CD4-positive, alpha-beta T cell (primary cell): ENCODE measurements at regions of chr4 and their contacts with region 1.

Region 1: DNA sequence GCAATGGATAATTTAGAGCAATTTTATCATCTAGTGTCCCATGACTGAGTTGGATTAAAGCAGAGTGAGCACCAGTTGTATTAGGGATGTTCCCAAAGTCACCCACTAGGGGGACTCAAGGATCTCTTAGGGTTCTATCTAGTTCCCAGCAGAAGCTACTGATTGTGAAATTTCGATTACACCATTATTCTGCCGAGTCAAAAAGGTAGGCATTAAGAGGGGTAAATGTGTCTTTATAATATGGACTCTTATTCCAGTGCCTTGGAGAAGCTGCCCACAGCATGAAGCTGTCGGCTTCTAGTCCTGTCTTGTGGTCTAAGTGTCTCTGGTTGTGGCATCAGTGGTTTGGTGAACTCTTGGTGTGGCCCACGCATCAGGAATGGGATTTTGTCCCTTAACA is 53.3 kb downstream of the RGS12 start:
- DNase-seq: peak in 7 of 14 experiments; percentile 19 to 79 (median 58)
- ATAC-seq: peak; percentile 84
- H3K4me3 ChIP-seq: no peak overlapping the region
- H3K4me3 Mint-ChIP-seq: no peak overlapping the region
- H3K27ac ChIP-seq: no peak overlapping the region
- H3K27ac Mint-ChIP-seq: no peak overlapping the region
- H3K4me1 ChIP-seq: peaks cover 7% of the 10 kb centered on the region
- H3K4me1 Mint-ChIP-seq: peaks cover 34% of the 10 kb centered on the region
- H3K27me3 ChIP-seq: no peaks in the 10 kb centered on the region
- H3K27me3 Mint-ChIP-seq: no peaks in the 10 kb centered on the region
- CTCF ChIP-seq: peak; percentile 96

Region 2: DNA sequence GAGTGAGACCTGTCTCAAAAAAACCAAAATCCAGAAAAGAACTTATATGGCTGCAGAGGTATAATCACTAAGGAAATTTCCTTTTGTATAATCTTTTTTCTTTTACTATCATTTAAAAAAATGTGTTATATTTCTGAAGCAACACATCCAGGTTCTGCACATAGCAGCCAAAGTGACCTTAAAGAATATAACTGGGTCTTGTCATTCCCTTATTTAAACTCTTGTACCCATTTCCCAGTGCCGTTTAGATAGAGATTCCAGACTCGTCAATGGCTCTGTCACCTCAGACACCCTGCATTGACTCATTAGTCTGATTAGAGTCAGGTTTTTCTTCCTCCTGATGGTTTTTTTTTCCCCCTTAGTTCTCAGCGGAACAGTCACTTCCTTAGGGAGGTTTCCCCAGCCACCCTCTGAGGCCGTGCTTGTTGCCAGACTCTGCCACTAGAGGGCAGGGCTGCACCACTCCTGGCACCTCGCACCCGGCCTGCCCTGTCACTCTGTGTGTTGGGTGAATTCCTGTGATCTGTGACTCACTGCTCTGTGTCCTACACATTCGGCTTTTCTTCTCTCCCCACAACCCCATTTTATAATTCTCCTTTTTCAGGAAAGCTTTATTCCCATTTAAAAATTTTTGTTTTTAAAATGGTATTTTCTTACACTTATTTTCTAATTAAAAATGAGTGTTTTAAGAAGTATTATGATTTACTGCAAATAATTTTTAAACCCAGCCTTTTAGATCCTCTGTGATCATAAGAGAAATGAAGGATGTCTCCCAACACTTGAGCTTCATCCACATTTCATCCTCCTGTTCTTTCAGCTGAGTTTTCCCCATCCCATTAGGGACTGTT is 239.6 kb before region 1 on chr4:
- CTCF ChIA-PET with region 1: no interaction called
- POLR2A ChIA-PET with region 1: no interaction called
- intact Hi-C with region 1: loop called in 1 of 2 experiments (anchors 5 kb)
- DNase-seq: peak; percentile 64 to 92 (median 80)
- ATAC-seq: peak; percentile 99
- H3K4me3 ChIP-seq: no peak overlapping the region
- H3K4me3 Mint-ChIP-seq: no peak overlapping the region
- H3K27ac ChIP-seq: no peak overlapping the region
- H3K27ac Mint-ChIP-seq: peak overlapping the region; percentile 1
- H3K4me1 ChIP-seq: peaks cover 5% of the 10 kb centered on the region
- H3K4me1 Mint-ChIP-seq: peaks cover 7% of the 10 kb centered on the region
- H3K27me3 ChIP-seq: no peaks in the 10 kb centered on the region
- H3K27me3 Mint-ChIP-seq: no peaks in the 10 kb centered on the region
- CTCF ChIP-seq: peak; percentile 99

Region 3: GRCh38 chr4:3193531-3194203 is 152.5 kb before region 1 on chr4:
- CTCF ChIA-PET with region 1: no interaction called
- POLR2A ChIA-PET with region 1: no interaction called
- intact Hi-C with region 1: loop called (anchors 1 to 2 kb)
- DNase-seq: peak in 3 of 14 experiments; percentile 47 to 60 (median 48)
- ATAC-seq: peak; percentile 38
- H3K4me3 ChIP-seq: no peak overlapping the region
- H3K4me3 Mint-ChIP-seq: peak overlapping the region; percentile 16
- H3K27ac ChIP-seq: no peak overlapping the region
- H3K27ac Mint-ChIP-seq: peak overlapping the region; percentile 9
- H3K4me1 ChIP-seq: peaks cover 53% of the 10 kb centered on the region
- H3K4me1 Mint-ChIP-seq: peaks cover 58% of the 10 kb centered on the region
- H3K27me3 ChIP-seq: no peaks in the 10 kb centered on the region
- H3K27me3 Mint-ChIP-seq: no peaks in the 10 kb centered on the region
- CTCF ChIP-seq: peak; percentile 70

Region 4: GRCh38 chr4:3369781-3370674 is 23.9 kb after region 1 on chr4:
- CTCF ChIA-PET with region 1: interaction called, 5 read pairs
- POLR2A ChIA-PET with region 1: interaction called, 5 read pairs
- intact Hi-C with region 1: loop called in 1 of 2 experiments (anchors 1 kb)
- DNase-seq: peak in 8 of 14 experiments; percentile 7 to 86 (median 60)
- ATAC-seq: peak; percentile 74
- H3K4me3 ChIP-seq: peak overlapping the region; percentile 32
- H3K4me3 Mint-ChIP-seq: peak overlapping the region; percentile 74
- H3K27ac ChIP-seq: no peak overlapping the region
- H3K27ac Mint-ChIP-seq: peak overlapping the region; percentile 52
- H3K4me1 ChIP-seq: peaks cover 55% of the 10 kb centered on the region
- H3K4me1 Mint-ChIP-seq: peaks cover 74% of the 10 kb centered on the region
- H3K27me3 ChIP-seq: peaks cover 0 to 9% of the 10 kb centered on the region in 2 experiments
- H3K27me3 Mint-ChIP-seq: peaks cover 11% of the 10 kb centered on the region
- CTCF ChIP-seq: no peak

Region 5: GRCh38 chr4:3388471-3389232 is 42.5 kb after region 1 on chr4:
- CTCF ChIA-PET with region 1: no interaction called
- POLR2A ChIA-PET with region 1: no interaction called
- intact Hi-C with region 1: loop called in 1 of 2 experiments (anchors 1 kb)
- DNase-seq: peak in 3 of 14 experiments; percentile 20 to 68 (median 61)
- ATAC-seq: no peak
- H3K4me3 ChIP-seq: no peak overlapping the region
- H3K4me3 Mint-ChIP-seq: peak overlapping the region; percentile 45
- H3K27ac ChIP-seq: no peak overlapping the region
- H3K27ac Mint-ChIP-seq: no peak overlapping the region
- H3K4me1 ChIP-seq: peaks cover 20% of the 10 kb centered on the region
- H3K4me1 Mint-ChIP-seq: peaks cover 29% of the 10 kb centered on the region
- H3K27me3 ChIP-seq: no peaks in the 10 kb centered on the region
- H3K27me3 Mint-ChIP-seq: no peaks in the 10 kb centered on the region
- CTCF ChIP-seq: no peak

Region 6: DNA sequence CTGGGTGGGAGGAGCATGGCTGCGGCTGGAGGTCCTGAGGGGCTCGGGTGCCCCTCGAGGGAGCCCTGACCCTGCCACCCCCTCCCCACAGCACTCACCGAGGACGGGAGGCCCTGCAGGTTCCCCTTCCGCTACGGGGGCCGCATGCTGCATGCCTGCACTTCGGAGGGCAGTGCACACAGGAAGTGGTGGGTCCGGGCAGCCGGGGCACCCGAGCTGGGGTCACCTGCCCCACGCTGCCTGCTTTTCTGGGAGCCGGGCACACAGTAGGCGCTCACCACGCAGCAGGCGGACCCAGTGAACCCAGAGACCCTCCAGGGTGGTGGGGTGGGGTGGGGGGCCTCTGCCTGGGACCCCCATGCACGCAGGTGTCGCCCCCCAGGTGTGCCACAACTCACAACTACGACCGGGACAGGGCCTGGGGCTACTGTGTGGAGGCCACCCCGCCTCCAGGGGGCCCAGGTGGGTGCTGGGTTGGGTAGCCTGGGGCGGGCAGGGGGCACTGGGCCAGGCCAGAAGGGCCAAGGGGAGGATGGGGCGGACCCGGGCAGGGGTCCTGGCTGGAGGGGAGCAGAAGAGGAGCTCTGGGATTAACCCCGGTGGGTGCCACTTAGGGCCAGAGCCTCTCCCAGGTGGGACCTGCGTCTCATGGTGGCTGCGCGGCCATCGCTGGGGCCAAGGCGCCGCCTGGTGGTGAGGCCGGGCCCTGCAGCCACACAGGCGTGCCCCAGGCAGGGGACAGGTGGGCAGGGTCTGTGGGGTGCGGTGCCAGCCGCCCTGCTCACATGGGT is 97.0 kb after region 1 on chr4:
- CTCF ChIA-PET with region 1: interaction called, 4 read pairs
- POLR2A ChIA-PET with region 1: no interaction called
- intact Hi-C with region 1: loop called (anchors 1 kb)
- DNase-seq: peak; percentile 38 to 83 (median 58)
- ATAC-seq: peak; percentile 86
- H3K4me3 ChIP-seq: no peak overlapping the region
- H3K4me3 Mint-ChIP-seq: no peak overlapping the region
- H3K27ac ChIP-seq: no peak overlapping the region
- H3K27ac Mint-ChIP-seq: no peak overlapping the region
- H3K4me1 ChIP-seq: peaks cover 11% of the 10 kb centered on the region
- H3K4me1 Mint-ChIP-seq: no peaks in the 10 kb centered on the region
- H3K27me3 ChIP-seq: no peaks in the 10 kb centered on the region
- H3K27me3 Mint-ChIP-seq: no peaks in the 10 kb centered on the region
- CTCF ChIP-seq: peak; percentile 88

Region 7: DNA sequence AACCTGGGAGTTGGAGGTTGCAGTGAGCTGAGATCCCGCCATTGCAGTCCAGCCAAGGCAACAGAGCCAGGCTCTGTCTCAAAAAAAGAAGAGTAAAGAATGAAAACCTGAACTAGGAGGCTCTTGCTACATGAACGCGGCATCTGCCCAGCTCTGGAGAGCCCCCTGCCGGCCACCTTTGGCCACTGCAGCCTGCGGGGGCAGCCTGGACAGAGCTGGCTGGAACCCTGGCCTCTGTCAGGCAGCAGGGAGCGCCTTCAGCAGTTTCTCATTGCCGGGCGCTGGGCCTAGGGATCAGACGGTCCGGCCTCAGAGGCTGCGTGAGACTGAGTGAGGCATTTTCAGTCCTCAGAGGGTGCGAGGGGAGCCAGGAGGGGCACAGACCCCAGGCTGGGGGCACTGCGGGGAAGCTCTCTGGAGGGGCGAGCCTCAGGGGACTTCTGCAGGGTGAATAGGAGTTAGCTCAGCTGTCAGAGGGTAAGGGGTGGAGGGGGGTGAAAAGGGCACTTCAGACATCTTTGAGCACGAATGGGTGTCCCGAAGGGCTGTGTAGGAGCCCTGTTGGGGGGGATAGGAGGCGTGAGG is 134.5 kb after region 1 on chr4:
- CTCF ChIA-PET with region 1: no interaction called
- POLR2A ChIA-PET with region 1: no interaction called
- intact Hi-C with region 1: loop called (anchors 1 kb)
- DNase-seq: peak; percentile 47 to 80 (median 66)
- ATAC-seq: peak; percentile 88
- H3K4me3 ChIP-seq: no peak overlapping the region
- H3K4me3 Mint-ChIP-seq: no peak overlapping the region
- H3K27ac ChIP-seq: no peak overlapping the region
- H3K27ac Mint-ChIP-seq: no peak overlapping the region
- H3K4me1 ChIP-seq: peaks cover 22% of the 10 kb centered on the region
- H3K4me1 Mint-ChIP-seq: no peaks in the 10 kb centered on the region
- H3K27me3 ChIP-seq: peaks cover 24 to 27% of the 10 kb centered on the region in 2 experiments
- H3K27me3 Mint-ChIP-seq: peaks cover 27% of the 10 kb centered on the region
- CTCF ChIP-seq: peak; percentile 94